GM12878 (cell line): ENCODE measurements at regions of chr10 and their contacts with region 1.

Region 1: GRCh38 chr10:22682237-22683139 is 31.9 kb downstream of the PIP4K2A start:
- DNase-seq: peak; percentile 52
- ATAC-seq: peak; percentile 64
- H3K4me3 ChIP-seq: peak overlapping the region; percentile 45; the same call in 1 of the 2 replicates
- H3K27ac ChIP-seq: peak overlapping the region; percentile 82
- H3K4me1 ChIP-seq: peaks cover 43% of the 10 kb centered on the region
- H3K27me3 ChIP-seq: no peaks in the 10 kb centered on the region
- CTCF ChIP-seq: no peak
- EP300 ChIP-seq: no peak
- POLR2A ChIP-seq: no peak
- RAD21 ChIP-seq: no peak

Region 2: DNA sequence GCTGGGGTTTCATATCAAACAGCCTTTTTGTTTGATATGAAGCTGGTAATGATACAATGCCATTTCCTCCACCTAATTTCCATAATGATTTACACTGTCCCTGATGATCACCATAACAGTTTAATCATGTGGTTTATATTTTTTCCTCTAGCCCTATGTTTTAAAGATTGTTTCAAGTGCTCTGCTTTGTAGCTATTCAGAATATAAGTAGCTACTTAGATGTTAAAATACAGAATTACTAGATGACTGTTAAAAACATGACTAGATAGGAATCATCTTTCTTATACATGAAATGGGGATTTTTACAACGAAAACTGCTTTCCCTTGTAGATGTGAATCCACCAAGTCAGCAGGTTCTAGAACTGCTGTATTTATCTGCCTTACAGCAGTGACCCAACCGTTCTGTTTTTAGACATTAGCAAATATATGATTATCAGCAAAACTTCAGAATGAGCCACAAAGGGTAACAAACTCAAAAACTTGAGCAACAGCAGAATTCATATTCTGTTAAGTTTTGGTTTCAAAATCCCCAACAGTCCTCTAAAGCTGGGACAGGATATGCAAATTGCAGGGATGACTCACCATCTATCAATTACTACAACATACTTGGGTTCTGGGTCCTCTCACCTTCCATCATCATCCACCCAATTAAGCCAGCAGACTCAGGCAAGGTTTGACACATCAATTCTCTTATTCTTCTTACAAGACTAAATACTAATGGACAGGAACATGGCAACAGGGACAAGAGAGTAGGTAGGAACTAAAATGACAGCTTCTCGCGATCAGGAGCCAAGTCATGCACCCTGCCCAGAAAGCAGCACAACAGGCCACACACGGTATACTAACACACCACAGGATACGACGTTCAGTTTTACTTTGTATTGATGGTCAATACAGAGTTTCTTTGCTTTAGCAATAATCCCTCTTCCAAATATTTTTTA is 52.0 kb before region 1 on chr10:
- CTCF ChIA-PET with region 1: interaction called, 3 read pairs
- POLR2A ChIA-PET with region 1: interaction called, 6 read pairs
- RAD21 ChIA-PET with region 1: interaction called, 14 read pairs
- SMC1A ChIA-PET with region 1: interaction called, 18 read pairs
- in situ Hi-C with region 1: no loop called
- intact Hi-C with region 1: no loop called
- DNase-seq: peak; percentile 92
- ATAC-seq: peak; percentile 89
- H3K4me3 ChIP-seq: peak overlapping the region; percentile 57
- H3K27ac ChIP-seq: peak overlapping the region; percentile 89
- H3K4me1 ChIP-seq: peaks cover 42% of the 10 kb centered on the region
- H3K27me3 ChIP-seq: no peaks in the 10 kb centered on the region
- CTCF ChIP-seq: no peak
- EP300 ChIP-seq: peak; percentile 70; a peak in 3 of 4 replicates
- POLR2A ChIP-seq: no peak
- RAD21 ChIP-seq: 0 out of 2 replicates have a peak, but pooled peaks have one; percentile 13

Region 3: DNA sequence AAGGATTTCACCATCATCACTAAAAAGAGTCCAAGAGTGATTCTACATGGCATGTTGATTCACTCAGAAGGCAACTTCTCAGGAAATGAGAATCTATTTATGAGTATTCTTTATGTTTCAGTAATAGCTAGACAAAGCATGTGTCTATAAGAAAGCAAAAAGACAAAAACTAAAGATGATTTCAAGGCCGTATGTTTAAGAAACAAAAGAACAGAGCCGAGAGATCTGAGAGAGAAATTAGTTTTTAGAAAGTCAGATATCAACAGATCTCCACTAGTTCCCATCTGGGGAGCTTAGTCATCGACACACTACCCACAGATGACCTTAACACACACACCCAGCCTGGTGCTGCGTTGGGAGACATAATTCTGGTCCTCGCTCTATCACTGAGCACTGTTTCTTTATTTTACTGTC is 10.9 kb after region 1 on chr10:
- CTCF ChIA-PET with region 1: interaction called, 3 read pairs
- POLR2A ChIA-PET with region 1: interaction called, 6 read pairs
- RAD21 ChIA-PET with region 1: interaction called, 21 read pairs
- SMC1A ChIA-PET with region 1: interaction called, 82 read pairs
- in situ Hi-C with region 1: no loop called
- intact Hi-C with region 1: no loop called
- DNase-seq: no peak
- ATAC-seq: peak; percentile 45
- H3K4me3 ChIP-seq: no peak overlapping the region; the same call in 1 of the 2 replicates
- H3K27ac ChIP-seq: peak overlapping the region; percentile 63
- H3K4me1 ChIP-seq: peaks cover 25% of the 10 kb centered on the region
- H3K27me3 ChIP-seq: no peaks in the 10 kb centered on the region
- CTCF ChIP-seq: no peak
- EP300 ChIP-seq: no peak
- POLR2A ChIP-seq: no peak
- RAD21 ChIP-seq: no peak